CD8-positive, alpha-beta memory T cell (primary cell): ENCODE measurements at regions of chr16 and their contacts with region 1.

Region 1: DNA sequence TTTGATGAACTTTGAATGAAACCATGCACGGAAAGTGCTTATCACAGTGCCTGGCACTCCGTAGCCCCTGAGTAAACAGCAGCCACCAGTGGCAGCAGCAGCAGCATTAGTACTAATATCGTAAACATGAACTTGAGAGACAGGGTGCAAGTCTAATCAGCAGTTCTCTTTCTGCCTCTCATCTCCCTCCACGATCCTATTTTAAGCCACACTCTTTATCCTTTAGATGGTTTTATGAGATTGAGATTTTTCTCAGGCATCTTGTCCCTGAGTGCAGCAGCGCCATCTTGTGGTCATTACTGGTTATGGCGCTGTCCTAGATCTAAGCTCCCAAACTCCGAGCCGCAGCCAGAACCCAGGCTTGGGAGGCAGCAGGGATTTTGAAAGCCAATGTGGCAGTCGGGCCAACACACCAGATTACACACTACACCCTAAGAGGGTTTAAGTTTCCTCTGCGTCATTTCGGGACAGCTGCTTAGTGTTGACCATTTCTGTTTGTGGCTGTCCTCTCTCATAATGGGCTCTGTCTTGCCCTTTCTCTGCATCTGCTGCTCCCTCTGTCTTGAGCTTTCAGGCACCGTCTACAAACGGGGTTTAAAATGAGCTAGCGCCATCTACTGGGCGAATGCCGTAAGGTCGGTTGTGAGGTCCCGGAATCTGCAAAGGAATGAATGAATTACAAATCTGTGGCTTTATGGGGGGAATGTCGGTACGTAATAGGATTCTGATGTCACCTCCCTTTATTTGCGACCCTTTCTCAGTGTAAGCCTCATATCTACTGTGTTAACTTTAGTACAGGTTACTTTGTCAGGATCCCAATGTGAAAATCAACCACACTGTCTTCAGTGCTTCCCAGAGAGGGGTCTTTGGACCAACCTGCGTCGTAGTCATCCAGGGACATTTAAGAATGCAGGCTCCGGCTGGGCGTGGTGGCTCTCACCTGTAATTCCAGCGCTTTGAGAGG is 64.5 kb downstream of the CYLD start:
- DNase-seq: peak; percentile 76 to 89 (median 86)
- H3K4me3 ChIP-seq: peak overlapping the region; percentile 53
- H3K4me3 Mint-ChIP-seq: peak overlapping the region; percentile 15 to 87 (median 80)
- H3K27ac ChIP-seq: no peak overlapping the region
- H3K27ac Mint-ChIP-seq: peak overlapping the region; percentile 4 to 91 (median 78)
- H3K4me1 ChIP-seq: peaks cover 6% of the 10 kb centered on the region
- H3K4me1 Mint-ChIP-seq: peaks cover 8 to 12% (median 10%) of the 10 kb centered on the region in 3 donors
- H3K27me3 ChIP-seq: no peaks in the 10 kb centered on the region
- H3K27me3 Mint-ChIP-seq: peaks cover 0 to 2% of the 10 kb centered on the region in 2 donors

Region 2: GRCh38 chr16:50024684-50025536 is 781.5 kb before region 1 on chr16 and contains the start of gene CNEP1R1:
- CTCF ChIA-PET with region 1: interaction called, 35 read pairs
- POLR2A ChIA-PET with region 1: interaction called, 4 read pairs
- DNase-seq: peak; percentile 85 to 95 (median 94)
- H3K4me3 ChIP-seq: peak within 1 kb of the TSS; percentile 86
- H3K4me3 Mint-ChIP-seq: peak within 1 kb of the TSS; percentile 88 to 99 (median 97)
- H3K27ac ChIP-seq: peak within 1 kb of the TSS; percentile 71
- H3K27ac Mint-ChIP-seq: peak within 1 kb of the TSS; percentile 89 to 98 (median 94)
- H3K4me1 ChIP-seq: peaks cover 13% of the 10 kb centered on the region
- H3K4me1 Mint-ChIP-seq: peaks cover 24 to 50% (median 40%) of the 10 kb centered on the region in 3 donors
- H3K27me3 ChIP-seq: no peaks in the 10 kb centered on the region
- H3K27me3 Mint-ChIP-seq: peaks cover 0 to 4% of the 10 kb centered on the region in 2 donors
- total RNA-seq, gene CNEP1R1: 21.2 to 23.6 TPM

Region 3: GRCh38 chr16:50326949-50327402 is 479.4 kb before region 1 on chr16:
- CTCF ChIA-PET with region 1: interaction called, 21 read pairs
- POLR2A ChIA-PET with region 1: no interaction called
- DNase-seq: peak; percentile 53 to 85 (median 78)
- H3K4me3 ChIP-seq: no peak overlapping the region
- H3K4me3 Mint-ChIP-seq: peak overlapping the region in 3 of 7 donors; percentile 25 to 53 (median 26)
- H3K27ac ChIP-seq: no peak overlapping the region
- H3K27ac Mint-ChIP-seq: peak overlapping the region; percentile 62 to 96 (median 90)
- H3K4me1 ChIP-seq: peaks cover 25% of the 10 kb centered on the region
- H3K4me1 Mint-ChIP-seq: peaks cover 29 to 71% (median 38%) of the 10 kb centered on the region in 3 donors
- H3K27me3 ChIP-seq: no peaks in the 10 kb centered on the region
- H3K27me3 Mint-ChIP-seq: no peaks in the 10 kb centered on the region

Region 4: GRCh38 chr16:50671644-50672260 is 134.6 kb before region 1 on chr16:
- CTCF ChIA-PET with region 1: interaction called, 79 read pairs
- POLR2A ChIA-PET with region 1: no interaction called
- DNase-seq: peak in 3 of 5 donors; percentile 21 to 31 (median 22)
- H3K4me3 ChIP-seq: no peak overlapping the region
- H3K4me3 Mint-ChIP-seq: peak overlapping the region in 1 of 7 donors; percentile 5
- H3K27ac ChIP-seq: no peak overlapping the region
- H3K27ac Mint-ChIP-seq: peak overlapping the region in 7 of 8 donors; percentile 4 to 91 (median 56)
- H3K4me1 ChIP-seq: peaks cover 14% of the 10 kb centered on the region
- H3K4me1 Mint-ChIP-seq: peaks cover 19 to 32% (median 31%) of the 10 kb centered on the region in 3 donors
- H3K27me3 ChIP-seq: no peaks in the 10 kb centered on the region
- H3K27me3 Mint-ChIP-seq: no peaks in the 10 kb centered on the region

Region 5: GRCh38 chr16:50731130-50731988 is 75.0 kb before region 1 on chr16:
- CTCF ChIA-PET with region 1: no interaction called
- POLR2A ChIA-PET with region 1: no interaction called
- DNase-seq: no peak
- H3K4me3 ChIP-seq: no peak overlapping the region
- H3K4me3 Mint-ChIP-seq: peak overlapping the region in 1 of 7 donors; percentile 14
- H3K27ac ChIP-seq: no peak overlapping the region
- H3K27ac Mint-ChIP-seq: peak overlapping the region in 2 of 8 donors; percentile 39 to 77
- H3K4me1 ChIP-seq: peaks cover 17% of the 10 kb centered on the region
- H3K4me1 Mint-ChIP-seq: peaks cover 0 to 8% (median 0%) of the 10 kb centered on the region in 3 donors
- H3K27me3 ChIP-seq: no peaks in the 10 kb centered on the region
- H3K27me3 Mint-ChIP-seq: no peaks in the 10 kb centered on the region

Region 6: DNA sequence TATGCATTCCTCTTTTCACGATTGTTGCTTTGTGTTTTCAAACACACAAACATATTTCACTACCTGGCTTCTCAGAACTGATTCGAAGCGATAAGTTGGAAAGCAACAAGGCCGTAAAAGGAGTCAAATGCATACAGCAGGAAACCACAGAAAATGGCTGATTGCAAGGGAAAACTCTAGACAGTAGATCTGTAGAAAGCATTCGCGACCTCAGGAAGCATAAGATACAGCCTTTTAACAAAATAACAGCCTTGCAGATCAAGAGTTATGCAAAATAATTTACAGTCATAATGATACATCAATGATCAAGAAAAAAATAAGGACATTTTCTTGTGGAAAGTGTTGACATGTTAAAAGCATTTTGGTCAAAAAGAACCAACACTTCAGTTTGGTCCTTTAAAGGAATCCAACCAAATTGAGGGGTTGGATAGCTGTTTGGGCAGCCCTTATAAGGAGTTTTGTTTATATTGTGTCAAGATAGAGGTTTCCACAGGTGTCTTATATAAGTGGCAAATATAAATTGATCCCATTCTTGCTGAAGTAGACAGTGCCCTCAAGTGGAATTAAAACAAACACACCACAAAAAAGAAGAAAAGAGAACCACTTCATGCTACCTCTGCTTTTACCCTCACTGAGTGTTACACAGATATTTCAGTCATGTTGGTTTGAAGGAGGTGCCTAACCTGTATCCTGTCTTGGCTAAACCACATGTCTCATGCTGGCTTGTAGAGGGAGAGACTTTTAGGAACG is 59.0 kb before region 1 on chr16:
- CTCF ChIA-PET with region 1: interaction called, 18 read pairs
- POLR2A ChIA-PET with region 1: no interaction called
- DNase-seq: peak in 2 of 5 donors; percentile 59 to 72
- H3K4me3 ChIP-seq: peak overlapping the region; percentile 49
- H3K4me3 Mint-ChIP-seq: peak overlapping the region; percentile 80 to 99 (median 96)
- H3K27ac ChIP-seq: peak overlapping the region; percentile 22
- H3K27ac Mint-ChIP-seq: peak overlapping the region; percentile 34 to 99 (median 94)
- H3K4me1 ChIP-seq: peaks cover 70% of the 10 kb centered on the region
- H3K4me1 Mint-ChIP-seq: peaks cover 62 to 87% (median 82%) of the 10 kb centered on the region in 3 donors
- H3K27me3 ChIP-seq: no peaks in the 10 kb centered on the region
- H3K27me3 Mint-ChIP-seq: peaks cover 0 to 3% of the 10 kb centered on the region in 2 donors